HEK293 (cell line): ENCODE measurements at regions of chr11 and their contacts with region 1.

Region 1: GRCh38 chr11:8566613-8567210 is 27.3 kb downstream of the STK33 start:
- H3K4me3 ChIP-seq: no peak overlapping the region
- H3K27ac ChIP-seq: no peak overlapping the region
- H3K4me1 ChIP-seq: no peaks in the 10 kb centered on the region
- CTCF ChIP-seq: no peak

Region 2: GRCh38 chr11:8006349-8006977 is 560.2 kb before region 1 on chr11:
- CTCF ChIA-PET with region 1: interaction called, 13 read pairs
- POLR2A ChIA-PET with region 1: no interaction called
- H3K4me3 ChIP-seq: no peak overlapping the region
- H3K27ac ChIP-seq: no peak overlapping the region
- H3K4me1 ChIP-seq: no peaks in the 10 kb centered on the region
- CTCF ChIP-seq: peak; percentile 68

Region 3: GRCh38 chr11:8192016-8192895 is 374.5 kb before region 1 on chr11:
- CTCF ChIA-PET with region 1: interaction called, 27 read pairs
- POLR2A ChIA-PET with region 1: no interaction called
- H3K4me3 ChIP-seq: no peak overlapping the region
- H3K27ac ChIP-seq: no peak overlapping the region
- H3K4me1 ChIP-seq: no peaks in the 10 kb centered on the region
- CTCF ChIP-seq: peak; percentile 61

Region 4: DNA sequence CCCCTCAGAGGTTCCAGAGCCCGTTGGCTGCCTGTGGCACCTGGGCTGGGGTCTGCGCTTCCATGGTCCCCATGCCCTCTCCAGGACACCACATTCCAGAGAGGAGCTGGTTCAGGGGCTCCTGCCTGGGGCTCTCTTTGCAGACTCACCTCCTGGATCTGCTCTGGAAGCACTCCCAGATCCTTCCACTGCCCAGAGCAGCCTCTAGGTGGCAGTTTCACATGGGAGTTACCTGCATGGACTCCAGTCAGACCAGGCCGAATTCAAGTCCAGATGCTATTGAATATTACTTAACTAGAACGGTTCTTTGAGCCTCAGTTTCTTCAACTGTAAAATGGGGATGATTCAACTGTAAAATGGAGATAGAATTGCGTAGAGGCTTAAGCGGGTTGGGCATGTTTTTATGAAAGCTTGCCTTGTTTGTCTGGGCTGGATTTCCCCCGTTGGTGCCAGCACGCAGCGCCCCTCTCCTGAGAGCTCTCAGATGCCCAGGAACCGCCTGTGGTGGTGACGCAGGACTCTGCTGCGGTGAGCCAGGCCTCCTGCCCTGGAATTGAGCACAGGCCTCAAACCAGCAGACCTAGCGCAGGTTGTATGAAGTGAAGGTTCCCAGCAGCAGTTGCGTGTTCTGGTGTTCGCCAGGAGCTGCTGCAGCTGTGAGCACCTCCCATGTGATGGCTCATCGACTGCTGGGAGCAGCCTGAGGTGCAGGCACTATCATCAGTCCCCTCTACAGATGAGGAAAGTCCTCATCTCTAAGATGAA is 347.3 kb before region 1 on chr11:
- CTCF ChIA-PET with region 1: interaction called, 54 read pairs
- POLR2A ChIA-PET with region 1: no interaction called
- H3K4me3 ChIP-seq: no peak overlapping the region
- H3K27ac ChIP-seq: no peak overlapping the region
- H3K4me1 ChIP-seq: no peaks in the 10 kb centered on the region
- CTCF ChIP-seq: no peak

Region 5: GRCh38 chr11:8442301-8442700 is 124.4 kb before region 1 on chr11:
- CTCF ChIA-PET with region 1: no interaction called
- POLR2A ChIA-PET with region 1: no interaction called
- H3K4me3 ChIP-seq: no peak overlapping the region
- H3K27ac ChIP-seq: no peak overlapping the region
- H3K4me1 ChIP-seq: no peaks in the 10 kb centered on the region
- CTCF ChIP-seq: no peak

Region 6: GRCh38 chr11:8577791-8578581 is 11.3 kb after region 1 on chr11:
- CTCF ChIA-PET with region 1: interaction called, 10 read pairs
- POLR2A ChIA-PET with region 1: no interaction called
- H3K4me3 ChIP-seq: no peak overlapping the region
- H3K27ac ChIP-seq: no peak overlapping the region
- H3K4me1 ChIP-seq: no peaks in the 10 kb centered on the region
- CTCF ChIP-seq: no peak